Mammary epithelial cell (primary cell): ENCODE measurements at regions of chr7 and their contacts with region 1.

Region 1: GRCh38 chr7:7315851-7316250 is 133.5 kb downstream of the C1GALT1 start:
- DNase-seq: no peak
- H3K4me3 ChIP-seq: no peak overlapping the region
- H3K27ac ChIP-seq: no peak overlapping the region
- H3K4me1 ChIP-seq: no peaks in the 10 kb centered on the region
- H3K27me3 ChIP-seq: no peaks in the 10 kb centered on the region
- CTCF ChIP-seq: no peak

Region 2: GRCh38 chr7:6556196-6556595 is 759.7 kb before region 1 on chr7:
- CTCF ChIA-PET with region 1: no interaction called
- dilution Hi-C with region 1: no loop called
- in situ Hi-C with region 1: no loop called
- intact Hi-C with region 1: no loop called
- DNase-seq: no peak
- H3K4me3 ChIP-seq: no peak overlapping the region
- H3K27ac ChIP-seq: no peak overlapping the region
- H3K4me1 ChIP-seq: no peaks in the 10 kb centered on the region
- H3K27me3 ChIP-seq: no peaks in the 10 kb centered on the region
- CTCF ChIP-seq: peak in 1 of 2 donors; percentile 38

Region 3: DNA sequence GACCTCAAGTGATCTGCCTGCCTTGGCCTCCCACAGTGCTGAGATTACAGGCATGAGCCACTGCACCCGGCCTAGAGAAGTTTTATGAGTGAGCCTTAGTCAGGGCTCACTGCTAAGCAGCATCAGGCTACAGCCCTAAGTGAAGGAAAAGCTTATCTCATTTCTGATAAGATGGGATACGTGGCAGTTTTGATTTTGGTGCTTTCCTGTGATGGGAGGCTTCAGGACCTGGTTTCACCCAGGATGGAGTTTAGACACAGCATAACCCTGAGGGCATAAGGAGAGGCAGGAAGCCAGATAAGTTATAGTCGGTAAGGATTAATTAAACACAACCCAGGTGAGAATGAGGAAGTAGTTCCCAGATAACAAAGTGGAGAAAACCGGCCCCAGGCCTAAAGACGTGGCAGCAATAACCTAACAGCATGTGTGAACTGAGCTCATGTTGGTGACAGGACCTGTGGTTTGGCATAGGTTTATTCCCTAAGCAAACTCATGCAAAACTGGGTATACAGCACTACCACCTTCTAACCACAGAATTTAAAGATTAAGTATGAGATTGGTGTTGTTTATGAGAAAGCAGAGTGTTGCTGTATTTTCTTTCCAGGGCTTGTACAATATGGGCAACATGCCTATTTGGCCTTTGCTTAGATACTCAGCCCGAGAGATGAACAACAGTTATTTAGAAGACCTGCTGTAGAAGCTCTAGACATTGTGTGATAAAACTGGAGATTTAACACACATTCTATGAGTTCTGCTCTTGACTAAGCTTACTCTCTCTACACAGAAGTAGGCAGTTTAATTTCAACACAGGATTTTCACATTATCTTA is 100.4 kb after region 1 on chr7:
- CTCF ChIA-PET with region 1: no interaction called
- dilution Hi-C with region 1: loop called (anchors 5 kb)
- in situ Hi-C with region 1: no loop called
- intact Hi-C with region 1: no loop called
- DNase-seq: peak; percentile 69
- H3K4me3 ChIP-seq: no peak overlapping the region
- H3K27ac ChIP-seq: no peak overlapping the region
- H3K4me1 ChIP-seq: peaks cover 6% of the 10 kb centered on the region
- H3K27me3 ChIP-seq: no peaks in the 10 kb centered on the region
- CTCF ChIP-seq: no peak

Region 4: GRCh38 chr7:7554021-7554432 is 238.2 kb after region 1 on chr7:
- CTCF ChIA-PET with region 1: no interaction called
- dilution Hi-C with region 1: no loop called
- in situ Hi-C with region 1: no loop called
- intact Hi-C with region 1: no loop called
- DNase-seq: peak; percentile 8
- H3K4me3 ChIP-seq: no peak overlapping the region
- H3K27ac ChIP-seq: no peak overlapping the region
- H3K4me1 ChIP-seq: no peaks in the 10 kb centered on the region
- H3K27me3 ChIP-seq: no peaks in the 10 kb centered on the region
- CTCF ChIP-seq: no peak